Endothelial cell of umbilical vein (primary cell): ENCODE measurements at regions of chr1 and their contacts with region 1.

Region 1: GRCh38 chr1:206430031-206430983 is 40.0 kb upstream of the IKBKE start:
- DNase-seq: peak; percentile 89
- H3K4me3 ChIP-seq: no peak overlapping the region
- H3K27ac ChIP-seq: peak overlapping the region; percentile 75
- H3K4me1 ChIP-seq: peaks cover 26% of the 10 kb centered on the region
- H3K27me3 ChIP-seq: no peaks in the 10 kb centered on the region
- CTCF ChIP-seq: peak in 1 of 2 donors; percentile 1
- POLR2A ChIP-seq: peak; percentile 37

Region 2: GRCh38 chr1:206419250-206419649 is 11.1 kb before region 1 on chr1:
- CTCF ChIA-PET with region 1: interaction called, 6 read pairs
- POLR2A ChIA-PET with region 1: no interaction called
- dilution Hi-C with region 1: no loop called
- intact Hi-C with region 1: loop called (anchors 1 kb)
- DNase-seq: no peak
- H3K4me3 ChIP-seq: no peak overlapping the region
- H3K27ac ChIP-seq: no peak overlapping the region
- H3K4me1 ChIP-seq: peaks cover 9% of the 10 kb centered on the region
- H3K27me3 ChIP-seq: no peaks in the 10 kb centered on the region
- CTCF ChIP-seq: no peak
- POLR2A ChIP-seq: no peak